CD14-positive monocyte (primary cell): ENCODE measurements at regions of chr4 and their contacts with region 1.

Region 1: GRCh38 chr4:152849350-152849749 is 69.6 kb downstream of the ARFIP1 start:
- DNase-seq: no peak
- H3K4me3 ChIP-seq: no peak overlapping the region
- H3K4me3 Mint-ChIP-seq: no peak overlapping the region
- H3K27ac ChIP-seq: no peak overlapping the region
- H3K27ac Mint-ChIP-seq: peak overlapping the region in 3 of 7 donors; percentile 0 to 46 (median 5)
- H3K4me1 ChIP-seq: peaks cover 21 to 23% of the 10 kb centered on the region in 2 donors
- H3K4me1 Mint-ChIP-seq: peaks cover 26% of the 10 kb centered on the region
- H3K27me3 ChIP-seq: no peaks in the 10 kb centered on the region
- H3K27me3 Mint-ChIP-seq: no peaks in the 10 kb centered on the region
- CTCF ChIP-seq: no peak

Region 2: DNA sequence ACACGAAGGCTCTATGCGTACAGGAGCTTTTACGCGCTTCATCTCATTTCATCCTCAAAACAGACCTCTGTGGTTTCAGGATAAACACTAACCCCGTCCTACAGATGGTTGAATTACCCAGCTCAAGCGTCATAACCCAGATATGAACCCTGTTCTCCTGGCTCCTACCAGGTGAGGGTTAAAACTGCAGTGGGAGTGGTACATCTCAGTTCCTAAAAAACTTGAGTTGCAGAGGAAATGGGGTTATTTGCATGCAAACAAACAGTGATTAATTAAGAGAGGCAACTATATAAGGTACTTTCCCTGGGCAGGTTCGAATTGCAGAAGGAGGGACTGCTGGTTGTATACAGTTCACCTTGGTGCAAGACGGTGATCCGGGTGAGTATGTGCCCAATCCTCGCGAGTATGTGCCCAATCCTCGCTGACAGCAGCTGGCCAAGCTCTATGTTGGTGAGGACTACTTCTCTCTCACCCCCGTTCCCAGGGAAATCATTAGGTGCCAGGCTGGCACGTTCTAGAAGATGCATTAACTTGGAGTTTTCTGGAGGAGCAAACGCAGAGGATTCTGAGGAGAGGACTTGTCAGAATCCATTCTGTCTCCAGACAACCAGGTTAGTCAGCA is 159.3 kb after region 1 on chr4:
- intact Hi-C with region 1: no loop called
- DNase-seq: no peak
- H3K4me3 ChIP-seq: no peak overlapping the region
- H3K4me3 Mint-ChIP-seq: no peak overlapping the region
- H3K27ac ChIP-seq: no peak overlapping the region
- H3K27ac Mint-ChIP-seq: no peak overlapping the region
- H3K4me1 ChIP-seq: no peaks in the 10 kb centered on the region
- H3K4me1 Mint-ChIP-seq: peaks cover 9% of the 10 kb centered on the region
- H3K27me3 ChIP-seq: no peaks in the 10 kb centered on the region
- H3K27me3 Mint-ChIP-seq: no peaks in the 10 kb centered on the region
- CTCF ChIP-seq: no peak

Region 3: DNA sequence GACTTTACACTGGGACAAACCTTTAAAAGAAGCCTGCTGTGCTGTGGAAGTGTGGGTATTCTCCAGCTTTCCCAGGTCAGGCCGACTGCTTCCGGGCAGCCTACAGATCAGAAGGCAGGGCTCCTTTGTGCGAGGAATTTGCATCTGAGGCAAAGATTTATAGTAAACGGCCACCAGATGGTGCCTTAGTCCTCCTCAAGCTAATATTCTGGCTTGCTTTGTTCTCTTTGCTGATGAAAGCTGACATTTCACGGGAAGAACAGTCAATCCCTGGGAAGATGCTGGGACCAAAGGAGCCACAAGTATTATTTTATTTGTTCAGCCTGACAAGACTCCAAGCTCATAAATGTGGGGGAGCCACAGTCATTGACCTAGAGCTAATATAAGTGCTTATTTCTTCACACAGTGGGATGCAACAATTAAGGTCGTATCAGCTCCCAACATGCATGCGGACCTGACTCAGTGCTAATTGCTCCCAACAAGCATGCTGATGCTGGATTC is 234.1 kb after region 1 on chr4:
- intact Hi-C with region 1: loop called (anchors 5 kb)
- DNase-seq: peak; percentile 17 to 47 (median 36)
- H3K4me3 ChIP-seq: no peak overlapping the region
- H3K4me3 Mint-ChIP-seq: peak overlapping the region in 1 of 2 donors; percentile 40
- H3K27ac ChIP-seq: no peak overlapping the region
- H3K27ac Mint-ChIP-seq: peak overlapping the region in 1 of 7 donors; percentile 40
- H3K4me1 ChIP-seq: peaks cover 0 to 7% of the 10 kb centered on the region in 2 donors
- H3K4me1 Mint-ChIP-seq: peaks cover 21% of the 10 kb centered on the region
- H3K27me3 ChIP-seq: no peaks in the 10 kb centered on the region
- H3K27me3 Mint-ChIP-seq: peaks cover 4 to 16% (median 6%) of the 10 kb centered on the region in 3 donors
- CTCF ChIP-seq: peak; percentile 64